ENCODE measurements at regions of chr1 and their contacts with region 1.

Region 1: DNA sequence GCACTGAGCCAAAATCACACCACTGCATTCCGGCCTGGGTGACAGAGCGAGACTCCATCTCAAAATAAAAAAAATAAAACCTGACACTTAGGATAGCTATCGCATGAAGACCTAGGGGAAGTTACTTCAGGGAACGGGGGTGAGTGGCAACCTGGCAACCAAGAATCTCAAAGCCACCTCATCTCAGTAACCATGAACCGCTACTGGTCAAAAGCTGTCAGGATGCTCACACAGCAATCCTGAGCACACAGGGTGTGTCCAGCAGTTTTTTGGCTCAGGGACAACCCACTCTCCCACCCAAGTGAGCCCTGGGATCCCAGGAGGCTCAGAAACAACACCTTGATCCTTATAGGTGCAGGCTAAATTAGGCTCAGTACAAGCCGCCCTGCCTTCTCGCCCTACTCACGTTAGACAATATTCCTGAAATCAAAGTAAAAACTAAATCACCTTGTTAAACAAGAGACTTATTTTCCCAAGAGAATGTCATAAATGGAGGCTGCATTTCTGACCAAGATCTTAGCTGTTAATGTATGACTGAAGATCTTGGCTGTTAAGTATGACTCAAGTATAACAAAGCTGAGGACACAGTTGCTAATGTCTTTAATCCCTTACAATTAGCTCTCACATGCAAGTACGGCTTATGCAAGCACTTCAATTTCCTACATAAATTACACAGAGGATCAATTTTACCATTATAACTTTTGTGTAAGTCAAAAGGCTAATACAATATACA is 48.3 kb upstream of the NADK start:
- DNase-seq: peak; percentile 69

Region 2: DNA sequence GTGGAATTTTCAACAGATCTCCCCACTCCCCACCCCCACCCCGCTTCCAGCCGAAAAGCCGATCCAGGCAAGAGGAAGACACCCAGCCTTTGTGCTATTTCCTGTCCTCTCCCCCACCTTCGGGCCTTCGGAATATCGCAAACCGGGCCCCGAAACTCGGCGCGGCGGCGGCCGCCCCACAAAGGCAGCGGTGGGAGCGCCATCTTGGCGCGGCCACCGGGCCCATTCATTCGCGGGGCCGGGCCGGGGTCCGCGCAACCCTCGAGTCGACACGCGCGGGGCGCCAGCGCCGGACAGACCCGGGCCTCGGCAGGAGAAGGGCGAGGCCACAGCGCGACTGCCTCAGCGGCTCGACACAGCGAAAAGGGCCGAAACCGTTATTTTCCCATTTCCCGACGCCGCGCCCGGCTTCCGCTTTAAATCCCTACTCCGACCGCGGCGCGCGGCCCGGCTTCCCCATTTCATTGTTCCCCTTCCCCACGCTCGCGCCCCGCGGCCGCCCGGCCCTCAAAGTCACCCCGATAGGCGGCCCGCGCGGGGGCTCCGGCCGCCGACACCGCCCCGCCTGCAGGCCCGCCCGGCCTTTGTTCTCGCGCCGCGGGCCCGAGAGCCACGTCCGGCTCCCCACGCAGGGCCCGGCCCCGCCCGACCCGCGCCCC is 63.5 kb after region 1 on chr1:
- in situ Hi-C with region 1: loop called (anchors 10 kb)
- DNase-seq: peak; percentile 39

Region 3: DNA sequence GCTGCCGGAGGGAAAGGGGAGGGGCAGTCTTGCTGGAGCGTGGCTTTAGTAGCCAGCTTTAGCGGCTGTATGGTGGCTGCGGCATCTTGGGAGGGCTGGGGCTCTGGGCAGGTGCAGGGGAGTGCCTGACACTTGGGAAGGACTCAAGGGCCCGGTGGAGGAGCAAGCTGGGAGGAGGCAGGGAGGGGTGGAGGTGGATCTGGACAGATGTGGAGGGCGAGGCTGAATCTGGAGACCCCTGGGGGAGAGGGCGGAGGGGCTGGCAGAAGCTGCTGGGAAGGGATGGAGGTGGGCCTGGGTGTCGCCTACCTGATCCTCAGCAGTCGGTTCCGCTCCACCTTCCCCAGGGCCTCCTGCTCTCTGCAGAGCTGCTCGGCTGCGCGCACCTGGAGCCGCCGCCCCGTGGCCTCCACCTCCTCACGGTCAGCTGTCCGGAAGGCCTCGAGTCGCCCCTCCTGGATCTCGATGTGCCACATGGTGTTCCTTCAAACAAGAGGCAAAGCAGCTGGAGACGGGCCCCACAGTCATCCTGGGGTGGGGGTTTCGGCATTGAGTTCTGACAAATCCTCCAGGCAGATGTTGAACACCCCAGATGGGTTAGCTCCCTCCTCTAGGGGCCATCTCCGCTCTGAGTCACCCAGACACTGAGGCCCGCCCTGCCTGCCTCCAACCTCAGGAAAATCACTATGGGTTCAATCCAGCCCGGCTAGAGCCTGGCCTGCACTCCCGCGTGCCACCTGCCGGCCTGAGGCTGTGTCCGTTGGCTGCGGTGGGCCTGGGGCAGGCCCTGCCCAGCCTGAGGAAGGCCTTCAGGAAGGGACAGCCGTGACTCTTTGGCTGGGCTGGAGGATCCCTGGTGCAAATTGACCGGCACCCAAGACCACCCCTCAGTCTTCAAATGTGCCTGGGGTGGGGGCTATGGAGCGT is 147.5 kb after region 1 on chr1:
- in situ Hi-C with region 1: no loop called
- DNase-seq: no peak

Region 4: DNA sequence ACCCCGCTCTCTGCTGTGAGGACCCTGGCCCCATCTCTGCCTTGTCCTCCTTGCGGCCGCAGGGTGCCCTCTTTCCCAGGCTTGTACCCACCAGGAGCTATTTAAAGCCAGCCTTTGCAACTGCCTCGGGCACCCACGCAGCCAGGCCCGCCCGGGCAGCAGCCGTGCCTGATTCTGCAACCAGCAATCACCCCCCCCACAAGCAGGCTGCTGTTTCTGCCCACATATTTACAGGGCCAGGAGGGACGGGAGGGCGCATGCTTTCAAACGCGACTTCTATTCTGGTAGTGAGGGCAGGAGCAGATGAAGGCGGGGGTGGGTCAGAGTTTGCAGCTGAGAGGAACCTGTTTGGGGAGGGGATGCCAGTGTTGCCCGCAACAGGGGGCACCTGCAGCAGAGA is 206.2 kb after region 1 on chr1:
- in situ Hi-C with region 1: no loop called
- DNase-seq: no peak

Measured in ACHN (cell line).